ENCODE measurements at regions of chr17 and their contacts with region 1.

Region 1: DNA sequence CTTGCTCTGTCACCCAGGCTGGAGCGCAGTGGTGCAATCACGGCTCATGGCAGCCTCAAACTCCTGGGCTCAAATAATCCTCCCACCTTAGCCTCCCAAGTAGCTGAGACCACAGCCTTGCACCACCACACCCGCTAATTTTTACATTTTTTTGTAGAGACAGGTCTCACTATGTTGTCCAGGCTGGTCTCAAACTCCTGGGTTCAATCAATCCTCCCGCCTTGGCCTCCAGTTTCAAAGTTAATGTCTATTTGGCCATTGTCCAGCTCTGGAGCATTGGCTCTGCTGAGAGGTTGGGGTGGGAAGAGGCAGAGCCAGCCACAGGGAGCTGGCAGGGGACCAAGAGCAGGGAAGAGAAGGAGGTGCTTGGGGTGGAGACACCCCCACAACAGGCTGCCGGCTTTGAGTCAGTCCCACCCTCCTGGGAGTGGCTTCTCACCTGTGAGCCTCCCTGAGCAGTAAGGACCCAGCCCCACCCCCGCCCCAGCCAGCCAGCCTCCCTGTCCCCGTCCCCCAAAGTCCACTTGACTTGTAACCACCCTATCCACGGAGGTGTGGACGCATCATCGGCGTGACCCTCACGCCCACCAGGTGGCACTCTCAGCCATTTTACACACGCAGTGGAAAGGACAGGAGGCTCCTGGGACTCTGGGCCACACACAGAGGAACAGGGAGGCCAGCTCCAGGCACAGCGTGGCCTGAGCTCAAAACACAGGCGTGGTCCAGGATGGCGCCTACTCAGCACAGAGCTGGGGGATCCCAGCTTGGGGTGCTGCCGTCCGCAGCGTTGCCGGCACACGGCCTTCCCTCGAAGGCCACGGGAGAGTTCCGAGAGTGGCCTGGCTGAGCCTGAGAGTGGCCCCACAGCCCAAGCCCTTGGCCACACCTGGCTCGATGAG is 22.8 kb upstream of the PVALEF start:
- DNase-seq: peak; percentile 42 to 87
- H3K4me3 ChIP-seq: no peak overlapping the region
- H3K27ac ChIP-seq: no peak overlapping the region
- H3K4me1 ChIP-seq: no peaks in the 10 kb centered on the region
- H3K27me3 ChIP-seq: no peaks in the 10 kb centered on the region
- CTCF ChIP-seq: peak; percentile 67

Region 2: GRCh38 chr17:81109957-81110356 is 32.6 kb before region 1 on chr17:
- CTCF ChIA-PET with region 1: no interaction called
- POLR2A ChIA-PET with region 1: no interaction called
- intact Hi-C with region 1: no loop called
- DNase-seq: no peak
- H3K4me3 ChIP-seq: no peak overlapping the region
- H3K27ac ChIP-seq: no peak overlapping the region
- H3K4me1 ChIP-seq: no peaks in the 10 kb centered on the region
- H3K27me3 ChIP-seq: no peaks in the 10 kb centered on the region
- CTCF ChIP-seq: no peak

Region 3: GRCh38 chr17:81189670-81190530 is 47.4 kb after region 1 on chr17:
- CTCF ChIA-PET with region 1: no interaction called
- POLR2A ChIA-PET with region 1: no interaction called
- intact Hi-C with region 1: no loop called
- DNase-seq: no peak
- H3K4me3 ChIP-seq: no peak overlapping the region
- H3K27ac ChIP-seq: no peak overlapping the region
- H3K4me1 ChIP-seq: peaks cover 7% of the 10 kb centered on the region; the same call in 1 of the 2 replicates
- H3K27me3 ChIP-seq: no peaks in the 10 kb centered on the region
- CTCF ChIP-seq: peak; percentile 26; the same call in 1 of the 2 replicates

Region 4: DNA sequence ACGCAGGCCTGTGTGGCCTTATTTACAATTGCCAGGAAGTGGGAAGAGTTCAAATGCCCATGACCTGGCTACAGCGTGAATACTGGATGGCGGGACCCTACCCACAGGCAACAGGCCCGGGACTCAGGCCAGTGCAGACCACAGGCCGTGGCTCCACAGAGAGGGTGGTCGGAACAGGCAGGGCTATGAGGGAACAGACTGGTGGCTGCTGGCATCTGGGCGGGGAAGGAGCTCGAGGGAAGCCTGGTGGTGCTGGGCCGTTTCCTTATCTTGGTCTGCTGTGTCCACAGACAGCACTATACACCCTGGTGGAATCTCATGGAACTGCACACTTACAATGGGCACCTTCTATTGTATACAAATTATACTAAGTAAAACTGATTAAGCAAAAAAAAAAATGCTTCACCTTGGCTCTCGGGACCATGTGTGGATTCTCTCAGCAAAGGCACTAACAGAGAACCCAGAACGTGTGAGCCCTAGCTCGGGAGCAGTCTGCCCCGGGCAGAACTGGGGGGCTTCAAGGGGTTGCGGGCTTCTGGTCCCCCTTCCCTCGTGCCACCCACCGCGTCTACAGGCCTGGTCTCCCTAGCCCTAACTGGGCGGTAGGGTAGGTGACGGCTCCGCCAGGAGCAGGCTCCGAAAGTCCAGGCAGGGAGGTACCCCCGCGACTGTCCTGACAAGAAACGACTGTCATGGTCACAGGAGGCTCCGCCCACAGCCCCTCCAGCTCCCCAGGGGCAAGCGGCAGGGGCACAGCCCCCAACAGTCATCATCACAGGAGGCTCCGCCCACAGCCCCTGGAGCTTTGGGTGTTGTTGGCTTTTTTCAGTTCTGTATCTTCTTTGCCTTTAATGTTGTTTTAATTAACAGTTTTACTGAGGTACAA is 58.4 kb after region 1 on chr17:
- CTCF ChIA-PET with region 1: interaction called, 3 read pairs
- POLR2A ChIA-PET with region 1: no interaction called
- intact Hi-C with region 1: loop called (anchors 5 kb)
- DNase-seq: peak; percentile 45 to 53
- H3K4me3 ChIP-seq: no peak overlapping the region
- H3K27ac ChIP-seq: no peak overlapping the region
- H3K4me1 ChIP-seq: no peaks in the 10 kb centered on the region
- H3K27me3 ChIP-seq: no peaks in the 10 kb centered on the region
- CTCF ChIP-seq: peak; percentile 66

Region 5: GRCh38 chr17:81302861-81303333 is 160.3 kb after region 1 on chr17:
- CTCF ChIA-PET with region 1: no interaction called
- POLR2A ChIA-PET with region 1: no interaction called
- intact Hi-C with region 1: no loop called
- DNase-seq: peak in 1 of 2 experiments; percentile 54
- H3K4me3 ChIP-seq: no peak overlapping the region
- H3K27ac ChIP-seq: no peak overlapping the region
- H3K4me1 ChIP-seq: no peaks in the 10 kb centered on the region
- H3K27me3 ChIP-seq: no peaks in the 10 kb centered on the region
- CTCF ChIP-seq: no peak